ENCODE measurements at regions of chr6 and their contacts with region 1.

Region 1: DNA sequence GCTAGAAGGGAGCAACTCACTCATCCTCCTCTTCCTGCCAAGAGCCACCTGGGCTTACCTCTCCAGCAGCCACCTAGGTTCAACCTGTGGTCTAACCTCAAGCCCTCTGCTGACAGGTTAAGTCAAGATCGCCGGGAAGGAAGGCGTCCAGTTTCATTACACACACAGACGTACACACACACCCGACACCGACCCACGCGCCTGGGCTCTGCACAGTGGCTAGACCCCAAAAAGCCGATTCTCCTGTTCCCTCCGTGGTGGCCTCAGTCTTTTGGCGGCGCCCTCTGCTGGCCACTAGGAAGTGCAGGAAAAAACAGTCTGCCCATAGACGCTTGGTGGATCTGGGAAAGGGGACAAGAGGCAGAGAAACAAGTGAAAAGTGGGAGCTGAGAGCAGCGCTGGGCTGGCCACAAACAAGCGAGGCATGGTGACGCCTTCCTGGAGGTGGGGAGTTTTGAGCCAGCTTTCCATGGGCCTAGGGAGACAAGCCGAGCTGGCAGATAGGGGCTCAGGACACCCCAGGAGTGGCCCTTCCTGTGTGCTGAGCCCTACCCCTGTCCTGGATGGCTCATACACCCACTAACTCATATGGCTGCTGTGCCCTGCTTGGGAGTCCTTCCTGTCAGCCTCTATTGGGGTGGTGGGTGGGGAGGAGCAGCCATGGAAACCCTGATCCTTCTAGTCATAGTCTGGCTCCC is 52.7 kb downstream of the MRPL14 start:
- DNase-seq: peak; percentile 44 to 75 (median 63)
- ATAC-seq: peak; percentile 62
- H3K4me3 ChIP-seq: peak overlapping the region; percentile 65
- H3K4me3 Mint-ChIP-seq: peak overlapping the region; percentile 71 to 98 (median 84)
- H3K27ac ChIP-seq: no peak overlapping the region
- H3K27ac Mint-ChIP-seq: peak overlapping the region in 5 of 9 donors; percentile 2 to 80 (median 19)
- H3K4me1 ChIP-seq: peaks cover 12 to 16% of the 10 kb centered on the region in 2 donors
- H3K4me1 Mint-ChIP-seq: peaks cover 0 to 36% (median 15%) of the 10 kb centered on the region in 7 donors
- H3K27me3 ChIP-seq: no peaks in the 10 kb centered on the region
- H3K27me3 Mint-ChIP-seq: peaks cover 0 to 23% (median 12%) of the 10 kb centered on the region in 5 donors

Region 2: GRCh38 chr6:43575772-43576551 is 498.6 kb before region 1 on chr6 and contains the starts of genes POLH and XPO5:
- CTCF ChIA-PET with region 1: no interaction called
- POLR2A ChIA-PET with region 1: no interaction called
- intact Hi-C with region 1: loop called in 1 of 2 experiments (anchors 10 kb)
- DNase-seq: peak; percentile 83 to 94 (median 88)
- ATAC-seq: peak; percentile 99
- H3K4me3 ChIP-seq: peak within 1 kb of the TSS; percentile 77
- H3K4me3 Mint-ChIP-seq: peak within 1 kb of the TSS; percentile 90 to 100 (median 98)
- H3K27ac ChIP-seq: peak within 1 kb of the TSS; percentile 89
- H3K27ac Mint-ChIP-seq: peak within 1 kb of the TSS; percentile 78 to 94 (median 92)
- H3K4me1 ChIP-seq: peaks cover 20 to 21% of the 10 kb centered on the region in 2 donors
- H3K4me1 Mint-ChIP-seq: peaks cover 21 to 61% (median 40%) of the 10 kb centered on the region in 7 donors
- H3K27me3 ChIP-seq: no peaks in the 10 kb centered on the region
- H3K27me3 Mint-ChIP-seq: no peaks in the 10 kb centered on the region
- total RNA-seq, gene POLH: 9.1 to 65.6 (median 19.3) TPM
- total RNA-seq, gene XPO5: 35.0 to 107 (median 41.9) TPM

Region 3: GRCh38 chr6:43667245-43668150 is 407.1 kb before region 1 on chr6:
- CTCF ChIA-PET with region 1: interaction called, 28 read pairs
- POLR2A ChIA-PET with region 1: no interaction called
- intact Hi-C with region 1: loop called (anchors 1 kb)
- DNase-seq: peak; percentile 63 to 85 (median 77)
- ATAC-seq: peak; percentile 87
- H3K4me3 ChIP-seq: no peak overlapping the region
- H3K4me3 Mint-ChIP-seq: peak overlapping the region in 9 of 10 donors; percentile 23 to 79 (median 64)
- H3K27ac ChIP-seq: peak overlapping the region; percentile 10
- H3K27ac Mint-ChIP-seq: peak overlapping the region in 7 of 9 donors; percentile 22 to 89 (median 68)
- H3K4me1 ChIP-seq: peaks cover 8 to 9% of the 10 kb centered on the region in 2 donors
- H3K4me1 Mint-ChIP-seq: peaks cover 14 to 45% (median 18%) of the 10 kb centered on the region in 7 donors
- H3K27me3 ChIP-seq: no peaks in the 10 kb centered on the region
- H3K27me3 Mint-ChIP-seq: no peaks in the 10 kb centered on the region

Region 4: GRCh38 chr6:43764721-43765120 is 309.9 kb before region 1 on chr6:
- CTCF ChIA-PET with region 1: interaction called, 43 read pairs
- POLR2A ChIA-PET with region 1: interaction called, 3 read pairs
- intact Hi-C with region 1: loop called (anchors 1 kb)
- DNase-seq: no peak
- ATAC-seq: no peak
- H3K4me3 ChIP-seq: no peak overlapping the region
- H3K4me3 Mint-ChIP-seq: no peak overlapping the region
- H3K27ac ChIP-seq: no peak overlapping the region
- H3K27ac Mint-ChIP-seq: no peak overlapping the region
- H3K4me1 ChIP-seq: no peaks in the 10 kb centered on the region
- H3K4me1 Mint-ChIP-seq: peaks cover 0 to 12% (median 5%) of the 10 kb centered on the region in 7 donors
- H3K27me3 ChIP-seq: no peaks in the 10 kb centered on the region
- H3K27me3 Mint-ChIP-seq: peaks cover 0 to 15% (median 0%) of the 10 kb centered on the region in 5 donors

Region 5: DNA sequence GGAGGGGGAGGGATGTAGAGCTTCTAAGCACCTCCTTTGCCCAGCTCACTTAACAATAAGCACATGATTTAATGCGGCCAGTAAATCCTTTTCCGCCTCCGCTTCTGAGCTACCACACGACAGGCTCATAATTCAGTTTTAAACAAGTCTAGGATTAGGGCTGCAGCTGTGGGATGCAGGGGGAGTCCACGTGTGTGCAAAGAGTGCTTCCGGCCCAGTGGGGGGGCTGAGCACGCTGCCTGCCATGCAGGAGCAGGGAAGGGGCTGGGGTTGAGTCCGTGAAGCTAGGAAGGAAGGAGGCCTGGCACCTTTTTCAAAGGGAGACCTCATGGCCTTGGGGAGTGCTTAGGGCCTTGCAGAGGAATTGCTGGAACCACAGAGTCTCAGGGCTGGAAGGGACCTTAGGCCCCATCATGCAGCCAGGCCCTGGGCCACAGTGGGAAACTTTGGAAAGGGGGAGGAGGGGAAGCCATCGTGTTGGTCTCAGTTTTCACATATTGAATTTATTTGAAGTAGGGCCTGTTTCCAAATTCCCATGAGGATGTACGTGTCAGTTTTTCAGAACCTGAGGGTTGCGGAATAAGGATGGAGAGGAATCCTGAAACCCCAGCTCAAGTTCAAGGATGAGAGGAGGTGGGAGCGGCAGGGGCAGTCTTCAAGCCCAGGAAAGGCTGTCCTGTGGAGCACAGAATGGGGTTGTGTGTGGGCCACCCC is 208.5 kb before region 1 on chr6:
- CTCF ChIA-PET with region 1: no interaction called
- POLR2A ChIA-PET with region 1: no interaction called
- intact Hi-C with region 1: no loop called
- DNase-seq: no peak
- ATAC-seq: no peak
- H3K4me3 ChIP-seq: no peak overlapping the region
- H3K4me3 Mint-ChIP-seq: no peak overlapping the region
- H3K27ac ChIP-seq: no peak overlapping the region
- H3K27ac Mint-ChIP-seq: no peak overlapping the region
- H3K4me1 ChIP-seq: no peaks in the 10 kb centered on the region
- H3K4me1 Mint-ChIP-seq: no peaks in the 10 kb centered on the region
- H3K27me3 ChIP-seq: no peaks in the 10 kb centered on the region
- H3K27me3 Mint-ChIP-seq: peaks cover 0 to 18% (median 7%) of the 10 kb centered on the region in 5 donors

Region 6: GRCh38 chr6:44002593-44003344 is 71.8 kb before region 1 on chr6:
- CTCF ChIA-PET with region 1: interaction called, 3 read pairs
- POLR2A ChIA-PET with region 1: interaction called, 3 read pairs
- intact Hi-C with region 1: loop called (anchors 2 to 5 kb)
- DNase-seq: peak; percentile 18 to 75 (median 45)
- ATAC-seq: peak; percentile 69
- H3K4me3 ChIP-seq: peak overlapping the region; percentile 44
- H3K4me3 Mint-ChIP-seq: peak overlapping the region; percentile 58 to 81 (median 74)
- H3K27ac ChIP-seq: no peak overlapping the region
- H3K27ac Mint-ChIP-seq: no peak overlapping the region
- H3K4me1 ChIP-seq: peaks cover 3 to 4% of the 10 kb centered on the region in 2 donors
- H3K4me1 Mint-ChIP-seq: peaks cover 0 to 20% (median 8%) of the 10 kb centered on the region in 7 donors
- H3K27me3 ChIP-seq: peaks cover 0 to 5% of the 10 kb centered on the region in 2 donors
- H3K27me3 Mint-ChIP-seq: peaks cover 22 to 46% (median 37%) of the 10 kb centered on the region in 5 donors